Gastrocnemius medialis (tissue), 4 donors: ENCODE measurements at regions of chr10 and their contacts with region 1.

Region 1: GRCh38 chr10:109883859-109884771 is 39.2 kb downstream of the XPNPEP1 start:
- DNase-seq: peak; percentile 36 to 60
- ATAC-seq: peak; percentile 87
- H3K4me3 ChIP-seq: no peak overlapping the region
- H3K27ac ChIP-seq: peak overlapping the region; percentile 10 to 60 (median 40)
- H3K4me1 ChIP-seq: peaks cover 7 to 14% of the 10 kb centered on the region in 2 donors
- H3K27me3 ChIP-seq: no peaks in the 10 kb centered on the region
- CTCF ChIP-seq: peak; percentile 86 to 93 (median 90)
- POLR2A ChIP-seq: no peak

Region 2: DNA sequence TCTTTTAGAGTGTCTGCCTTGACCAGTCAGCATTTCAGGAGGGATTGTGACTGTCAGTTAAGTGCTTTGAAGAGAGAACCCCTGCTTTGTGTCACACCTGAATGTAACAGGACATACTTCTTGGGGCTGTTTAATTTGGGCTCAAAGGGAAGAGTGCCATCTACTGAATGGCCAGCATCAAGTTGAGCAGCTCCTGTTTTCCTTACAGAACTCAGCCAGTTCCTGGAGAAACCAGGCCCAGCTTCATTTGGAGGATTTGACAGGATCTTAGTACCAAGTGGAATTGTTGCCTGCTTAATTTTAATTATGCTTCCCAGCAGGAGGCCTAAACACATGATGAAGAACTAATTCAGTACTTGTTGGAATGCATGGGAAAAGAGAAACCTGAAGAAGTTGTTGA is 131.9 kb after region 1 on chr10:
- in situ Hi-C with region 1: loop called in 2 of 4 experiments (anchors 10 to 25 kb)
- intact Hi-C with region 1: loop called (anchors 1 kb)
- DNase-seq: no peak
- ATAC-seq: peak in 1 of 2 donors; percentile 45
- H3K4me3 ChIP-seq: no peak overlapping the region
- H3K27ac ChIP-seq: no peak overlapping the region
- H3K4me1 ChIP-seq: peaks cover 0 to 6% of the 10 kb centered on the region in 2 donors
- H3K27me3 ChIP-seq: no peaks in the 10 kb centered on the region
- CTCF ChIP-seq: peak in 1 of 5 experiments; percentile 30
- POLR2A ChIP-seq: no peak

Region 3: GRCh38 chr10:110279407-110279986 is 395.4 kb after region 1 on chr10:
- in situ Hi-C with region 1: loop called in 3 of 4 experiments (anchors 10 to 25 kb)
- intact Hi-C with region 1: no loop called
- DNase-seq: peak; percentile 12 to 40
- ATAC-seq: peak; percentile 69 to 87
- H3K4me3 ChIP-seq: no peak overlapping the region
- H3K27ac ChIP-seq: peak overlapping the region in 1 of 4 donors; percentile 1
- H3K4me1 ChIP-seq: peaks cover 18 to 26% of the 10 kb centered on the region in 2 donors
- H3K27me3 ChIP-seq: no peaks in the 10 kb centered on the region
- CTCF ChIP-seq: peak; percentile 69 to 78 (median 74)
- POLR2A ChIP-seq: no peak

Region 4: DNA sequence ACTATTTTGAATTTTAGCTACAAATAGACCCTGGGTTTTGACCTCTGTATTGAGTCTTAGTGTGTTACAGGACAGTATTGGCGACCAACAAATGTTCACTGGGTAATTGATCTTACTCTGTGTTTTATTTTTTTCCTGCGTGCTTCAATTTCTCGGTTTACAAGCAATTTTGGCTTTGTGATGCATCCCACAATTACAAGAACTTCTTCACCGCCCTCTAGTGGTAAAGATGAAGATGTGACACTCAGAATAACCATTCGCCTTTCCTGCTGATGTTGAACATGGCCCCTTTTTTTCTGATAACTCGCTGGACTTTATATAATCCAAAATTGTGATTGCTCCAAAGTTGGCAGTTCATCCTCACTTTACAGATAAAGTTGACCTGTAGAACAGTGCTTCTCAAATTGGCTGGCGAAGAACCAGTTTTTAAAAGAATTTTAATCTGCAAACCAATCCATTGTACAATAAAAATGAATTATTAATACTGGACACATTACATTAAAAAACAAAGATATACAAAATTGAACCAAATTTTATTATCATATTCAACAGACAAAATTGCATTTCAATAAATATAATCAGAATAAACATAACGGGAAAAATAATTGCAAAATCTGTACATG is 663.1 kb after region 1 on chr10:
- in situ Hi-C with region 1: loop called in 3 of 4 experiments (anchors 25 kb)
- intact Hi-C with region 1: loop called (anchors 5 kb)
- DNase-seq: no peak
- ATAC-seq: peak; percentile 52 to 70
- H3K4me3 ChIP-seq: no peak overlapping the region
- H3K27ac ChIP-seq: no peak overlapping the region
- H3K4me1 ChIP-seq: no peaks in the 10 kb centered on the region
- H3K27me3 ChIP-seq: peaks cover 0 to 6% (median 0%) of the 10 kb centered on the region in 3 donors
- CTCF ChIP-seq: peak; percentile 57 to 81 (median 72)
- POLR2A ChIP-seq: no peak